Activated CD4-positive, alpha-beta T cell treated with anti-CD3 and anti-CD28 coated beads for 36 hours (primary cell): ENCODE measurements at regions of chr17 and their contacts with region 1.

Region 1: GRCh38 chr17:61412143-61412859 is 12.7 kb downstream of the TBX2 start:
- DNase-seq: peak; percentile 84
- ATAC-seq: peak; percentile 70
- H3K4me3 Mint-ChIP-seq: peak overlapping the region; percentile 49
- H3K27ac Mint-ChIP-seq: no peak overlapping the region
- H3K4me1 Mint-ChIP-seq: peaks cover 14% of the 10 kb centered on the region
- H3K27me3 Mint-ChIP-seq: peaks cover 31% of the 10 kb centered on the region

Region 2: GRCh38 chr17:60599620-60600489 is 812.4 kb before region 1 on chr17 and contains the start of gene PPM1D:
- CTCF ChIA-PET with region 1: no interaction called
- POLR2A ChIA-PET with region 1: no interaction called
- intact Hi-C with region 1: loop called in 1 of 2 experiments (anchors 5 kb)
- DNase-seq: peak; percentile 99
- ATAC-seq: peak; percentile 94
- H3K4me3 Mint-ChIP-seq: peak within 1 kb of the TSS; percentile 95
- H3K27ac Mint-ChIP-seq: peak within 1 kb of the TSS; percentile 97
- H3K4me1 Mint-ChIP-seq: peaks cover 31% of the 10 kb centered on the region
- H3K27me3 Mint-ChIP-seq: no peaks in the 10 kb centered on the region
- total RNA-seq, gene PPM1D: 9.3 to 9.7 TPM

Region 3: DNA sequence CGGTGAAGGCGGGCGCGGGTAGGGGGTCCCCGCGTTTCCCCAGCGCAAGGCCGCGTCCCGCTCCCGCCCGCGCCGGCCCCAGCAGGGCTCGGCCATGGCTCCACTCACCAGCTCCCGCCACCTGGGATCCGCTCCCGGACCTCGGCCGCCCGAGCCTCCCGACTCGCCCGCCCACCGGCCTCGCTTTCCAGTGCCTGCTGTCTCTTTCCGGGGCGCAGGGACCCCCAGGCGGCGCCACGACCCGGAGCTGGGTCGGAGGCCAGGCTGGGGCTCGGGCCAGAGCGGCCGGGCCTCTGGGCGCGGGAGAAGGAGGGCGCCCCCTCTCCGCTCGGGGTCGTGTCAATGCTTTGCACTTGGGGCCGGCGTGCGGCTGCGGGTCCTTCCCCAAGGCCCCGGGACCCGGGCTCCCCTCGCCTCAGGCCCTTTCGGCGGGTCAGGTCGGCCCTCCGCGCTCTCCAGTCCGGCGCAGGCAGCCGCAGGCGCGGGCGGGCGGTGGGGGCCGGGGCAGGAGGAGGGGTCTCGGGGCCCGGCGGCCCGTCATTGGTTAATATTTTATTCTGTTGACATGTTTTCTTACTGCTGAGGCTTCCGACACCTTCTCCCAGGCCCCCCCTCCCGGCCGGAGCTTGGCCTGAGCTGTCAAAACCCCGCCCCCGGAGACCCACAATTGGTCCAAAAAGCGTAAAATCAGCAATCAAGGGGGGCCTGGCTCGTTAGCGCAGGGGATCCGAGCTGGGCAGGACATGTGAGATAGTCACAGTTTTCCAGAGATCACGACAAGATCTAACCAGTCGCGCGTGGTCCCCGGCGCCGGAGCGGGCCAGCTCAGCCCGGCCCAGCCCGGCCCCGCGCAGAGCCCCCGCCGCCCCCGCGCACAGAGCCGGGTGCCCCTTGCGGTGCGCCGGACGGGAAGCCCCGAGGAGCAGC is 12.9 kb before region 1 on chr17 and contains the start of gene TBX2:
- CTCF ChIA-PET with region 1: interaction called, 6 read pairs
- POLR2A ChIA-PET with region 1: interaction called, 3 read pairs
- intact Hi-C with region 1: loop called in 1 of 2 experiments (anchors 2 kb)
- DNase-seq: peak; percentile 18
- ATAC-seq: no peak
- H3K4me3 Mint-ChIP-seq: peak within 1 kb of the TSS; percentile 47
- H3K27ac Mint-ChIP-seq: peak within 1 kb of the TSS; percentile 17
- H3K4me1 Mint-ChIP-seq: peaks cover 37% of the 10 kb centered on the region
- H3K27me3 Mint-ChIP-seq: peaks cover 57% of the 10 kb centered on the region
- total RNA-seq, gene TBX2: not detected

Region 4: GRCh38 chr17:61452301-61453290 is 40.3 kb after region 1 on chr17 and contains the start of gene TBX4:
- CTCF ChIA-PET with region 1: interaction called, 12 read pairs
- POLR2A ChIA-PET with region 1: no interaction called
- intact Hi-C with region 1: loop called in 1 of 2 experiments (anchors 2 kb)
- DNase-seq: peak; percentile 25
- ATAC-seq: peak; percentile 23
- H3K4me3 Mint-ChIP-seq: peak within 1 kb of the TSS; percentile 43
- H3K27ac Mint-ChIP-seq: no peak within 1 kb of the TSS
- H3K4me1 Mint-ChIP-seq: peaks cover 24% of the 10 kb centered on the region
- H3K27me3 Mint-ChIP-seq: peaks cover 47% of the 10 kb centered on the region
- total RNA-seq, gene TBX4: not detected

Region 5: DNA sequence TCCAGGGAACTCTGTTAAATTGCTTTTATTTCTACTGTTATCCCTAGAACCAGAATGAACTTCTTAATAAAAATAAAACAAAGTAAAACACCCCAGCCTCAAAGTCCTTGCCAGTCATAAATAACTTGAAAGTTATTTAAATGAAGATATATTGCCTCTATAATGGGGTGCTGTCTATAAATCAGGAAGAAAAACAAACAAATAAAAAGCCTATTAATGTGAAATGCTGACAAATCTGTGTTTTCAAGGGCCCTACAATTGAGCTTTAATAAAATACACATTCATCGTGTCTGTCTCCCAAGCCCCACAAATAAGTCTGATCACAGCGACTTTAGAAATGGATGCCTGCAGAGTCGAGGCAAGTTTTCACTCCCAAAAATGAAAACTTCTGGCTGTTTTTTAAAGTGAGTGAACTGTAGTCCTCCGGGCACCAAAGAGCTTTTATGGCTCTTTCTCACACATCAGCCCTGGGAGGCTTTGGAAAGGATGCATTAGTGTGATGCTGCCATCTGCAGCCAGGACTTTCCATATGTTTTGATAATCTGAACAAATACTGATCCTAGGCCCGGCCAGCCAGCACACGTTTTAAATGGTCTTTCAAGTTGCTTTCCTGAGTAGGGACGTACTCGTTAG is 162.4 kb after region 1 on chr17:
- CTCF ChIA-PET with region 1: interaction called, 4 read pairs
- POLR2A ChIA-PET with region 1: interaction called, 3 read pairs
- intact Hi-C with region 1: loop called in 1 of 2 experiments (anchors 2 kb)
- DNase-seq: peak; percentile 18
- ATAC-seq: peak; percentile 39
- H3K4me3 Mint-ChIP-seq: no peak overlapping the region
- H3K27ac Mint-ChIP-seq: no peak overlapping the region
- H3K4me1 Mint-ChIP-seq: no peaks in the 10 kb centered on the region
- H3K27me3 Mint-ChIP-seq: peaks cover 19% of the 10 kb centered on the region

Region 6: GRCh38 chr17:61635913-61636432 is 223.7 kb after region 1 on chr17:
- CTCF ChIA-PET with region 1: no interaction called
- POLR2A ChIA-PET with region 1: no interaction called
- intact Hi-C with region 1: loop called in 1 of 2 experiments (anchors 1 kb)
- DNase-seq: peak; percentile 72
- ATAC-seq: no peak
- H3K4me3 Mint-ChIP-seq: no peak overlapping the region
- H3K27ac Mint-ChIP-seq: no peak overlapping the region
- H3K4me1 Mint-ChIP-seq: no peaks in the 10 kb centered on the region
- H3K27me3 Mint-ChIP-seq: peaks cover 43% of the 10 kb centered on the region

Region 7: DNA sequence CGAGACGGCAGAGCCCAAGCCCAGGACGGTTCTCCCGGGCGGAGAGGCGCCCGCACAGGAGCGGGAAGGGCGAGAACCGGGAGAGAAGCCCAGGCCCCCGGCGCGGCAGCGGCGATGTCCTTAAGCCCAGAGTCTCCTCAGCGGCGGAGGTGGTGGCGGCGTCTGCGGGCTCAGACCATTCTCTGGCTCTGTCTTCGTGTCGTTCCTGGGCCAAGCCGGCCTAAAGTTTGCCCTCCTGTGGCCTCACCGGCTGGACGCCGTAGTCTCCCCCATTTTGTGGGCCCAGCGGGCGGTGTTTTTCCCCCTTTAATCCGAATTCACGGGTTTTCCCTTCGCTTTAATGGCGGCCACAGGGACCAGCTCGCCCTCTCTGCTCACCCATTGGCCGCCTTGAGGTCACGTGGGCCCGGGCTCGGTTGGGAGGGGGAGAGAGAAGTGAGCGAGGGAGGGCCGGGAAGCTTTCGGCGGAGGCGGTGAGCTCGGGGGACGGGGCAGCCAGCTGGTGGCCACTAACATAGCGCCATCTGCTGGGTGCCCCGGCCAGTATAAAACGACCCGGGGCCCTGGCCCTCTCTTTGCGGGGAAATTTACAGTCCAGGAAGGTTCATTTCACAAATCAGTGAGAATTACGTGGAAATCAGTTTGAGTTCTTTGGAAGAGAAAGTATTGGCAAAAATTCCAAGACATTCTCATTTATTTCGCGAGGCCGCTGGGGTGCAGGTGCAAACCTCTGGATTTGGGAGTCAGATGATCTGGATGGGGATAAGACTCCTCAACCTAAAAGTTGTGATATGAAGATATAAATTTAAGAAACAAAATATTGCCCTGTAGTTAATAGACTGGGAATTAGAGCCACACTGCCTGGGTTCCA is 653.5 kb after region 1 on chr17:
- CTCF ChIA-PET with region 1: no interaction called
- POLR2A ChIA-PET with region 1: no interaction called
- intact Hi-C with region 1: loop called in 1 of 2 experiments (anchors 1 kb)
- DNase-seq: peak; percentile 99
- ATAC-seq: peak; percentile 94
- H3K4me3 Mint-ChIP-seq: peak overlapping the region; percentile 98
- H3K27ac Mint-ChIP-seq: peak overlapping the region; percentile 98
- H3K4me1 Mint-ChIP-seq: peaks cover 28% of the 10 kb centered on the region
- H3K27me3 Mint-ChIP-seq: no peaks in the 10 kb centered on the region